ENCODE measurements at regions of chr11 and their contacts with region 1.

Region 1: DNA sequence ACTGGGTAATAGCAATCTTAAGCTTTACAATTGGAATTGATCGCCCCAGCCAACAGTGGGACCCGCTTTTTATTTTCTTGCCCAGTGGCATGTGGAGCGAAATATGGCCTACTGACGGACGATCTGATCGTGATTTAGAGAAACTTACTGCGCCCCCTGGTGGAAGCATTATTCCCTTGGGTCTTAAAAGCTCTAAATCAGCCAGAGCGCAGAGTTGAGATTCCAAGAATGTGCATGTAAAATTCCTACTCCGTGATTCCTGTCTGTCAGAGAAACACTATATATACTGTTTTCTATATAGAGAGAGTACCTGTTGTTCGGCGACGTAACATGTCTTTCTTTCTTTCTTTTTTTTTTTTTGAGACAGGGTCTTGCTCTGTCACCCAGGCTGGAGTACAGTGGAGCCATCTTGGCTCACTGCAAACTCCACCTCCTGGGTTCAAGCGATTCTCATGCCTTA is 3.7 kb upstream of the DPF2 start:
- DNase-seq: peak; percentile 80
- H3K4me3 ChIP-seq: peak overlapping the region in 2 of 8 donors; percentile 9 to 13
- H3K27ac ChIP-seq: peak overlapping the region; percentile 49 to 76 (median 65)
- H3K4me1 ChIP-seq: peaks cover 12 to 34% (median 23%) of the 10 kb centered on the region in 6 donors
- H3K27me3 ChIP-seq: no peaks in the 10 kb centered on the region
- CTCF ChIP-seq: peak; percentile 64 to 90 (median 84)
- POLR2A ChIP-seq: no peak

Region 2: DNA sequence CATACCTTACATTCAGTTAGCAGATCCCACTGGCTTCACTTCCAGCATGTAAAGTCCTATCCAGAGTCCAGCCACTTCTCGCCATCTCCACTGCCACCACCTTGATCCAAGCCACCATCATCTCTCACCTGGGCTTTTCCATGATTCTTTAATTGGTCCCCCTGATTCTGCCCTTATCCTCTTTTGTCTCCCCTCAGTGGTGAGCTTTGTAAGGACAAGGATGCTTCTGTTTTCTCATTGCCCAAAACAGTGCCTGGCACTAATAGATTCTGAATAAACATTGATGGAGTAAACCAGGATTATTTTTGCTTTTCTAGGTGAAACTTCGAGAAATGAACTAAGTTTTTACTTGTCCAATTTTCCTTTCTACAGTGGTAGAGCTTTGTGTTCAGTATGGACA is 63.8 kb before region 1 on chr11:
- intact Hi-C with region 1: loop called (anchors 5 kb)
- DNase-seq: no peak
- H3K4me3 ChIP-seq: no peak overlapping the region
- H3K27ac ChIP-seq: no peak overlapping the region
- H3K4me1 ChIP-seq: peaks cover 9 to 44% (median 22%) of the 10 kb centered on the region in 6 donors
- H3K27me3 ChIP-seq: no peaks in the 10 kb centered on the region
- CTCF ChIP-seq: peak in 3 of 11 experiments; percentile 31 to 60 (median 44)
- POLR2A ChIP-seq: no peak

Region 3: GRCh38 chr11:65498977-65499716 is 169.2 kb after region 1 on chr11 and contains the start of gene MALAT1:
- intact Hi-C with region 1: no loop called
- DNase-seq: peak; percentile 97
- H3K4me3 ChIP-seq: peak within 1 kb of the TSS; percentile 67 to 93 (median 81)
- H3K27ac ChIP-seq: peak within 1 kb of the TSS; percentile 95 to 100 (median 98)
- H3K4me1 ChIP-seq: peaks cover 20 to 53% (median 39%) of the 10 kb centered on the region in 6 donors
- H3K27me3 ChIP-seq: no peaks in the 10 kb centered on the region
- CTCF ChIP-seq: peak in 5 of 11 experiments; percentile 4 to 30 (median 15)
- POLR2A ChIP-seq: peak; percentile 100
- total RNA-seq, gene MALAT1: 10,088 to 24,490 (median 13,598) TPM

Region 4: DNA sequence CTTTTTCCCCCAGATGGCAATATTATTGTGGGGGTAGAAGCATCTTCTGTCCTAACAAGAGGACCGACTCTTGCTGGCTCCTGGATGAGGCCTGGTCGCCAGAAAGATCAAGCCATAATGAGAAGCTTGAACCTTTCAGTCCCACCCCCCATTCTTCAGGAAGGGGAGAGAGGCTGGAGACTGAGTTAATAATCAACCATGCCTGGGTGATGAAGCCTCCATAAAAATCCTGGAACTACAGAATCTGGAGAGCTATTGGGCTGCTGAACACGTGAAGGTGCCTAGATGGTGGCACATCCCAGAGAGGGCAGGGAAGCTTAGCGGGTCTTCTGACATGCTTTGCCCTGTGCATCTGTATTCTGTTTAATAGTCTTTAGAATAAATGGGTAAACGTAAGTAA is 434.5 kb after region 1 on chr11:
- intact Hi-C with region 1: no loop called
- DNase-seq: no peak
- H3K4me3 ChIP-seq: no peak overlapping the region
- H3K27ac ChIP-seq: no peak overlapping the region
- H3K4me1 ChIP-seq: peaks cover 0 to 7% (median 1%) of the 10 kb centered on the region in 6 donors
- H3K27me3 ChIP-seq: peaks cover 0 to 15% (median 0%) of the 10 kb centered on the region in 7 donors
- CTCF ChIP-seq: no peak
- POLR2A ChIP-seq: no peak